ENCODE measurements at regions of chr5 and their contacts with region 1.

Region 1: DNA sequence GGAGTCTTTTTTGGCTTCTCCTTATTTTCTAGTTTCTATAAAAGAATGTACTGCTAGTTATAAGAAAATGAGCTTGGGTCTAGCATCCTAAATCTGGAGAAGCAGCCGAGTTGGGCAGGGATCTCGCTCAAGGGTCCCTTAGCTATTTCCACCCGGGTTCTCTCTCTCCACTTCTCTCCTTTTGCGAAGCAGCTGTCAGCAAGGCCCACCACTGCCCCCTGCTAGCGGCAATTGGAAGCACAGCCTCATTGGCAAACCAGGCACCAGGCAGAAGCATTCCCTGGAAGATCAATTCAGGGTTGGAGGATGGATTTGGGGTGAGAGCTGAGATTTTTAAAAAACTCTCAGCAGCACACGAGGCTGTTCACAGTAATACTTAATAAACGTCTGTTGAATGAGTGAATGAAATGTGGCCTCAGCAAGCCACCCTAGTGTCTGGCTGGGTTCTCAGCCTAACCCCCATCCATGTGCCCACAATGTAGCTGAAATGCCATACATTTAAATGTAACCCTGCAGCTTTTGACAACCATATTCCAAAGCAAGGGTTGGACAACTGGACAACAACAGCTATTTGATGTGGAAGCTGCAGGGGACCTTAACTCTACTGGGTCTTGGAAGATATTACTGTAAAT is 34.6 kb upstream of the TNIP1 start:
- DNase-seq: peak; percentile 87
- ATAC-seq: peak; percentile 93
- H3K4me3 ChIP-seq: no peak overlapping the region
- H3K27ac ChIP-seq: no peak overlapping the region
- H3K4me1 ChIP-seq: no peaks in the 10 kb centered on the region
- H3K27me3 ChIP-seq: no peaks in the 10 kb centered on the region
- CTCF ChIP-seq: peak; percentile 93

Region 2: DNA sequence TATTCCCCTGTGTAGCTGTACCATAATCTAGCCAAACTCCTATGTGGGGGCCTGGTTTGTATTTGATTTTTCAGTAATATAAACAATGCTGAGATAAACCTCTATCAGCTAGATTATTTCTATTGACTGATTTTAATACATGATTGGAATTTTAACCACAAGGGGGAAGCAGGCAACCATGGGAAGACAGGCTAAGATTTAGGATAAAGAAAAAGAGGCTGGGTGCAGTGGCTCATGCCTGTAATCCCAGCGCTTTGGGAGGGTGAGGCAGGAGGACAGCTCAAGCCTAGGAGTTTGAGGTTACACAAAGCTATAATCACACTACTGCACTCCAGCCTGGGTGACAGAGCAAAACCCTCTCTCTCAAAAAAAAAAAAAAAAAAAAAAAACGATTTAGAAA is 113.1 kb before region 1 on chr5:
- intact Hi-C with region 1: loop called (anchors 5 kb)
- DNase-seq: no peak
- ATAC-seq: peak; percentile 24
- H3K4me3 ChIP-seq: no peak overlapping the region
- H3K27ac ChIP-seq: no peak overlapping the region
- H3K4me1 ChIP-seq: peaks cover 31% of the 10 kb centered on the region
- H3K27me3 ChIP-seq: no peaks in the 10 kb centered on the region
- CTCF ChIP-seq: peak; percentile 65

Region 3: GRCh38 chr5:151051066-151051930 is 64.1 kb before region 1 on chr5:
- intact Hi-C with region 1: loop called (anchors 5 kb)
- DNase-seq: peak; percentile 84
- ATAC-seq: peak; percentile 94
- H3K4me3 ChIP-seq: no peak overlapping the region
- H3K27ac ChIP-seq: peak overlapping the region; percentile 73
- H3K4me1 ChIP-seq: peaks cover 8% of the 10 kb centered on the region
- H3K27me3 ChIP-seq: no peaks in the 10 kb centered on the region
- CTCF ChIP-seq: peak; percentile 89